GM12878 (cell line): ENCODE measurements at regions of chr7 and their contacts with region 1.

Region 1: GRCh38 chr7:97499204-97499603 is 232.7 kb upstream of the TAC1 start:
- DNase-seq: no peak
- ATAC-seq: peak; percentile 86
- H3K4me3 ChIP-seq: no peak overlapping the region
- H3K27ac ChIP-seq: no peak overlapping the region
- H3K4me1 ChIP-seq: no peaks in the 10 kb centered on the region
- H3K27me3 ChIP-seq: no peaks in the 10 kb centered on the region
- CTCF ChIP-seq: peak; percentile 61 to 76 (median 61); a peak in 5 of 6 replicates
- EP300 ChIP-seq: no peak
- POLR2A ChIP-seq: no peak
- RAD21 ChIP-seq: peak; percentile 62

Region 2: DNA sequence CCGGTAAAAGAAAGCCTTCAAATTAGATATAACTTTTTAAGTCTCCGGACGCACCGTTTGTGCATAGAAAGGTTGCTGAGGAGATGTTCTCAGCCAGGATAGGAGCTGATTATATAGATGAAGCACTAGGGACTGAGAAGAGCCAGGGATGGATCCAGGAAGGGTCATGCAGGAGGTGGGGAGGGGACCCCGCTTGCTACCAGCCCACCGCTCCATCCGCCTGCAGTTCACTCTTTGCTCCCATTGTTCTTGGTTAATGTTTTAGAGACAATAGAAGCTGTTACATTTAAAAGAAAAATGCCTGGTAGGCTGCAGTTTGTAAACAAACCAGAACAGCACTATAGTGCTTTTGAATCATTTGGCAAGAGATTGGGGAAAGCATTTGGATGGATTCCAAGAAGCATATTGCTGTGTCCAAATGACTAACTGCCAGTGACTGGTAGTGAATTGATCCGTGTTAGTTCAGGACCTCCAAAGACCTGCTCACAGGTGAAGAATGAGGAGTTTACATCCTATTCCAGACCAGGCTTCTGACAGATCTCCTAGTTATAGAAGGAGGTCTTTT is 56.7 kb after region 1 on chr7:
- CTCF ChIA-PET with region 1: no interaction called
- POLR2A ChIA-PET with region 1: no interaction called
- RAD21 ChIA-PET with region 1: no interaction called
- SMC1A ChIA-PET with region 1: no interaction called
- in situ Hi-C with region 1: no loop called
- intact Hi-C with region 1: no loop called
- DNase-seq: no peak
- ATAC-seq: no peak
- H3K4me3 ChIP-seq: no peak overlapping the region
- H3K27ac ChIP-seq: no peak overlapping the region
- H3K4me1 ChIP-seq: no peaks in the 10 kb centered on the region
- H3K27me3 ChIP-seq: no peaks in the 10 kb centered on the region
- CTCF ChIP-seq: no peak
- EP300 ChIP-seq: no peak
- POLR2A ChIP-seq: no peak
- RAD21 ChIP-seq: no peak

Region 3: GRCh38 chr7:97819161-97819560 is 320.0 kb after region 1 on chr7:
- CTCF ChIA-PET with region 1: interaction called, 13 read pairs
- POLR2A ChIA-PET with region 1: no interaction called
- RAD21 ChIA-PET with region 1: interaction called, 8 read pairs
- SMC1A ChIA-PET with region 1: interaction called, 5 read pairs
- in situ Hi-C with region 1: no loop called
- intact Hi-C with region 1: no loop called
- DNase-seq: no peak
- ATAC-seq: no peak; the same call in 2 of the 3 replicates
- H3K4me3 ChIP-seq: no peak overlapping the region
- H3K27ac ChIP-seq: no peak overlapping the region
- H3K4me1 ChIP-seq: no peaks in the 10 kb centered on the region
- H3K27me3 ChIP-seq: no peaks in the 10 kb centered on the region
- CTCF ChIP-seq: 0 out of 6 replicates have a peak, but pooled peaks of 1 of the 3 experiments have one; percentile 3
- EP300 ChIP-seq: no peak
- POLR2A ChIP-seq: no peak
- RAD21 ChIP-seq: peak; percentile 32; the same call in 1 of the 2 replicates

Region 4: DNA sequence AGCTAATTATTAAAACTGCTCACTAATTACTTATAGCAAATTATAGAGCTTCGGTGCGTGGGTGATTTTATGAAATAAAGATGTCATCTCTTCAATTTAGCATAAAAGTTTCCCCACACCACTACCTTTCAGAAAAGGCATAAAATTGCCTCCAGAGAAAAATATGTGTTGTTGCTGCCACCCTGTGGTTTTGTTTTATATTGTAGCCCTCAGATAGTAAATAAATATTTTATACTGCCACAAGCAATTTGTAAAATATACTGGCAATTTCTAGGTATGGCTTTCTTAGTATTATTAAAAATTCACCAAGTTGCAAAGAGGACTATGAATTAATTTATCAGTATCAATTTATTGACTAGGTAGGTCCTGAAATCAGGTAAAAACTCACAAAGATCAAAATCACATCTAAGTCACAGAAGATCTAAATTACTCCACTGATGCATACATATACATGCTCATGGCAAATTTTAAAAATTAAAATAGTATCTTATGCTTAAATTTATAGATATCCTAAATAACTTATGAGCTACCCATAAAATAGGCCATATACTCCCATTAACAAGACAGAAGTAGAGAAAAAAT is 346.5 kb after region 1 on chr7:
- CTCF ChIA-PET with region 1: interaction called, 7 read pairs
- POLR2A ChIA-PET with region 1: no interaction called
- RAD21 ChIA-PET with region 1: interaction called, 7 read pairs
- SMC1A ChIA-PET with region 1: interaction called, 4 read pairs
- in situ Hi-C with region 1: no loop called
- intact Hi-C with region 1: loop called (anchors 2 kb)
- DNase-seq: no peak
- ATAC-seq: peak; percentile 67
- H3K4me3 ChIP-seq: no peak overlapping the region
- H3K27ac ChIP-seq: no peak overlapping the region
- H3K4me1 ChIP-seq: no peaks in the 10 kb centered on the region
- H3K27me3 ChIP-seq: no peaks in the 10 kb centered on the region
- CTCF ChIP-seq: peak; percentile 16 to 43 (median 20); a peak in 2 of 6 replicates
- EP300 ChIP-seq: no peak
- POLR2A ChIP-seq: no peak
- RAD21 ChIP-seq: peak; percentile 51